Activated naive CD4-positive, alpha-beta T cell treated with anti-CD3 and anti-CD28 coated beads, Interleukin-2, amount 10 ng/mL, durations not matched to agents 7 days and 5 days (primary cell): ENCODE measurements at regions of chr1 and their contacts with region 1.

Region 1: DNA sequence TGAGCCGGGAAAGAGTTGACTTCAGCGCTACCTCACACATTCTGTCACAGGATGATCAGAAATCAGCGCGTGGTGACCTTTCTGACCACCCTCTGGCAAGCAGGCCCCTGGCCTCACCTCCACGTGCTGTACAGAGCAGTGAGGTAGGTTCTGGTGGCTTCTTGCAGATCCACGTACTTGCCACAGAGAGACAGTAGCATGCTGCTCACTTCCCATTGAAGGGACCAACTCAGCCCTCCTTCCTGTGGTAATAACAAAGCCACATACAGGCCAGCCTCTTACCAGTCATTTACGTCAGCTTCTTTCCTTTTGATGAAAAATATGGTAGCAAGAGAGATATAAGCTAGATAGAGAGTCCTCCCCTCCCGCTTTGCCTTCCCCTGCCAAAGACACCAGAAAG is 200.7 kb downstream of the CHRM3 start:
- DNase-seq: peak; percentile 36
- H3K4me3 Mint-ChIP-seq: no peak overlapping the region
- H3K27ac Mint-ChIP-seq: no peak overlapping the region
- H3K4me1 Mint-ChIP-seq: peaks cover 6% of the 10 kb centered on the region
- H3K27me3 Mint-ChIP-seq: no peaks in the 10 kb centered on the region

Region 2: GRCh38 chr1:239606850-239607400 is 19.9 kb after region 1 on chr1:
- CTCF ChIA-PET with region 1: no interaction called
- DNase-seq: no peak
- H3K4me3 Mint-ChIP-seq: no peak overlapping the region
- H3K27ac Mint-ChIP-seq: no peak overlapping the region
- H3K4me1 Mint-ChIP-seq: no peaks in the 10 kb centered on the region
- H3K27me3 Mint-ChIP-seq: no peaks in the 10 kb centered on the region

Region 3: GRCh38 chr1:239898062-239898730 is 311.1 kb after region 1 on chr1:
- CTCF ChIA-PET with region 1: interaction called, 15 read pairs
- DNase-seq: peak; percentile 81
- H3K4me3 Mint-ChIP-seq: no peak overlapping the region
- H3K27ac Mint-ChIP-seq: no peak overlapping the region
- H3K4me1 Mint-ChIP-seq: peaks cover 4% of the 10 kb centered on the region
- H3K27me3 Mint-ChIP-seq: no peaks in the 10 kb centered on the region